Activated T-helper 1 cell treated with anti-CD3 and anti-CD28 coated beads, Interleukin-12 subunit alpha, Interleukin-12 subunit beta, Interleukin-2, Interleukin-4 antibody, amounts not matched to agents 30 ng/mL and 10 ng/mL and 1 ng/mL, durations not matched to agents 14 hours and 24 hours and 36 hours (primary cell): ENCODE measurements at regions of chr3 and their contacts with region 1.

Region 1: GRCh38 chr3:32992322-32992692 is 40.9 kb downstream of the CCR4 start:
- DNase-seq: no peak
- H3K4me3 Mint-ChIP-seq: peak overlapping the region; percentile 73
- H3K27ac Mint-ChIP-seq: peak overlapping the region; percentile 93
- H3K4me1 Mint-ChIP-seq: peaks cover 69% of the 10 kb centered on the region
- H3K27me3 Mint-ChIP-seq: no peaks in the 10 kb centered on the region

Region 2: DNA sequence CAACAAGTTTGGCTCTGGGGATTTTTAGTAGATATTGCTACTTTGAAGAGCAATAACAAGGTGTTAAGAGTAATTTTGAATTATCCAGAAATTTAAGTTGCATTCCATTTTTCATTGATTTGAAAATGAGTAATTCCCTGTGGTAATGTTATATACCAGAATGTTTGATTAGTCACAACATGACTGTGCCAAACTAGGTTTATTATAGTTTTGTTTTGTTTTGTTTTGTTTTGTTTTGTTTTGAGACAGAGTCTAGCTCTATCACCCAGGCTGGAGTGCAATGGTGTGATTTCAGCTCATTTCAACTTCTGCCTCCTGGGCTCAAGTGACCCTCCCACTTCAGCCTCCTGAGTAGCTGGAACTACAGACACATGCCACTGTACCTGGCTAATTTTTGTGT is 266.6 kb before region 1 on chr3:
- intact Hi-C with region 1: no loop called
- DNase-seq: no peak
- H3K4me3 Mint-ChIP-seq: no peak overlapping the region
- H3K27ac Mint-ChIP-seq: no peak overlapping the region
- H3K4me1 Mint-ChIP-seq: no peaks in the 10 kb centered on the region
- H3K27me3 Mint-ChIP-seq: no peaks in the 10 kb centered on the region

Region 3: DNA sequence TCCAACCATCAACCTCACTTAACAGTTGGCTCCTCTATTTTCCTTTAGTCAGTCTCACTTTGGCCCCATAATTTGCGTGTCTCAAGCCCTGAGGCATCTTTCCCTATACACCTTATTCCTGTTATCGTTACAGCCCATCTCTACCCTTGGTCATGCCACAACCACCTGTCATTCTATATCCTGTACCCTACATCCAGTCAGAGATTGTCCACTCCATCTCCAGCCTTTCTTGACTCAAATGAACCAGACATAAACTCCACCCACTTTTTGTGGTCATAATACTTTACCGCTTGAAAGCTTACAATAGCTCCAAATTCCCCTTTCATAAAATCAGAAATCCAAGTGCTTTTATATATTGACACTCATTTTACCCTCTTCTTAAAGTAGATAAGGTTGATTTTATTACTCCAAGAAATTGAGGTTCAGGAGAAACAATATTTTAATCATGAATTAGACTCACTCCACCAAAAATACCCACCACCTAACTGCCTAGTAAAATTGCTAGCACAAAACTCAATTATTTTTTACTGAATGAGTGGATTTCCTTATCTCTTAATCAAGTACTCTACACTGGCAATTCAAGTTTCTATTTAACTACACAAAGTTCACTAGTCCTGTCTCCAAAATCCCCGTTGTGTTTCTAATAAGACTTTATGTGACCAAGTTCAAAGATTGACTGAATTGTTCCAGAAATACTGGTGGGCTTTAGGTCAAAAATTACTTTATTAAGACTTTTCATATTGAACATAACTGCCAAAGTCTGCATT is 31.7 kb before region 1 on chr3:
- intact Hi-C with region 1: loop called (anchors 1 kb)
- DNase-seq: no peak
- H3K4me3 Mint-ChIP-seq: peak overlapping the region; percentile 34
- H3K27ac Mint-ChIP-seq: peak overlapping the region; percentile 97
- H3K4me1 Mint-ChIP-seq: peaks cover 56% of the 10 kb centered on the region
- H3K27me3 Mint-ChIP-seq: no peaks in the 10 kb centered on the region

Region 4: GRCh38 chr3:33006081-33006480 is 13.8 kb after region 1 on chr3:
- intact Hi-C with region 1: loop called (anchors 1 kb)
- DNase-seq: no peak
- H3K4me3 Mint-ChIP-seq: no peak overlapping the region
- H3K27ac Mint-ChIP-seq: peak overlapping the region; percentile 76
- H3K4me1 Mint-ChIP-seq: peaks cover 49% of the 10 kb centered on the region
- H3K27me3 Mint-ChIP-seq: no peaks in the 10 kb centered on the region

Region 5: DNA sequence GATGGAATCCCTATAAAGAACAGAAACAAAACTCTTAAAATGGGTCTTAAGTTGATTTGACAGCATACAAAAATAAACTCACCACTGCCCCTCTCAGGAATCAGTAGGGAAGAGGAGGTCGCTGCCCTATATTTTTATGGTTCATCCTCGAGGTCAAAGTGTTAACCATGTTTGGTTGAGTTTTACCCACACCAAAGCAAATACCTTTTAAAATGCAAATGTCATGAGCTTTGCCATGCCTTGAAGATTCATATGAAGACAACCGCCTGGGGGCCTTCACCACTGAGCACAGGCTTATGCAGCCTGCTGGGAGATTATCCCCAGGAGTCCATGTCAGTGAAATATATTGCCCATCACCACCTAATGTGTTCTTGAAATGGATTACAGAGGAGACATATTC is 38.5 kb after region 1 on chr3:
- intact Hi-C with region 1: loop called (anchors 2 kb)
- DNase-seq: peak; percentile 50
- H3K4me3 Mint-ChIP-seq: peak overlapping the region; percentile 12
- H3K27ac Mint-ChIP-seq: peak overlapping the region; percentile 49
- H3K4me1 Mint-ChIP-seq: peaks cover 32% of the 10 kb centered on the region
- H3K27me3 Mint-ChIP-seq: no peaks in the 10 kb centered on the region

Region 6: DNA sequence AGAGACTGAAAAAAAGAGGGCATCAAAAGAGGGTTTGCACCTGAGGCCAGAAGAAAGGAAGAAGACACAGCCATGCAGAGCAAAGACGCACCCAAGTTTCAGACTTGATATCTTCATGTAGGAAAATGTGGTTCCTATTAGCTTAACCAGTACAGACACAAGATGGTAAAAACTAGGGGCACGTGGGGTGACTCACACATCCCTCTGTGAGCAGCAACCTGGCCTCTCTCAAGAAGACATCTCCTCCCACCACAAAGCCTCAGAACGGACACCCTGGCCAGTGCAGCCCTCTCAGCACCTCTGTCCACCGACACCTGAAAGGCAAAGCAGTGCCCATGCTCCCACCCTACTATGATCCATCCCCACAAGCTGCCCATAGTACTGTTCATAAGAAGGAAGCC is 71.3 kb after region 1 on chr3:
- intact Hi-C with region 1: loop called (anchors 1 kb)
- DNase-seq: no peak
- H3K4me3 Mint-ChIP-seq: peak overlapping the region; percentile 2
- H3K27ac Mint-ChIP-seq: peak overlapping the region; percentile 93
- H3K4me1 Mint-ChIP-seq: peaks cover 57% of the 10 kb centered on the region
- H3K27me3 Mint-ChIP-seq: no peaks in the 10 kb centered on the region

Region 7: DNA sequence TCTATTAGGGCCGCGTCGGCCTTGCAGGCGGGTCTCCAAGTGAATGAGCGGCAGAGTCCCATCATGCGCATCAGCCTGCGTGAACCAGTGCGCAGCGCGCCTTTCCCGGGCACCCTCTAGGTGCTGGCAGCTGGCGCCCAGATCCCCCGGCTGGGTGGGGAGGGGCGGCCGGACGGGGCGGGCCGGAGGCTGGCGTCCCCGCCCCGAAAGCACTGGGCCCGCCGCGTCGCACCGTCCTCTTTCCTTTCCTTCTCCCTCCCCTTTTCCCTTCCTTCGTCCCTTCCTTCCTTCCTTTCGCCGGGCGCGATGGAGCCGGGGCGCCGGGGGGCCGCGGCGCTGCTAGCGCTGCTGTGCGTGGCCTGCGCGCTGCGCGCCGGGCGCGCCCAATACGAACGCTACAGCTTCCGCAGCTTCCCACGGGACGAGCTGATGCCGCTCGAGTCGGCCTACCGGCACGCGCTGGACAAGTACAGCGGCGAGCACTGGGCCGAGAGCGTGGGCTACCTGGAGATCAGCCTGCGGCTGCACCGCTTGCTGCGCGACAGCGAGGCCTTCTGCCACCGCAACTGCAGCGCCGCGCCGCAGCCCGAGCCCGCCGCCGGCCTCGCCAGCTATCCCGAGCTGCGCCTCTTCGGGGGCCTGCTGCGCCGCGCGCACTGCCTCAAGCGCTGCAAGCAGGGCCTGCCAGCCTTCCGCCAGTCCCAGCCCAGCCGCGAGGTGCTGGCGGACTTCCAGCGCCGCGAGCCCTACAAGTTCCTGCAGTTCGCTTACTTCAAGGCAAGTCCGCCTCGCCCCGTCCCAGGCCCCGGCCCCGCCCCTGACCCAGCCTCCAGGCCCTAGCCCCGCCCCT is 121.7 kb after region 1 on chr3 and contains the start of gene CRTAP:
- intact Hi-C with region 1: loop called (anchors 5 kb)
- DNase-seq: peak; percentile 78
- H3K4me3 Mint-ChIP-seq: peak within 1 kb of the TSS; percentile 87
- H3K27ac Mint-ChIP-seq: peak within 1 kb of the TSS; percentile 74
- H3K4me1 Mint-ChIP-seq: peaks cover 26% of the 10 kb centered on the region
- H3K27me3 Mint-ChIP-seq: no peaks in the 10 kb centered on the region
- total RNA-seq, gene CRTAP: 30.3 and 33.2 TPM in 2 replicates